ENCODE measurements at regions of chr1 and their contacts with region 1.

Region 1: GRCh38 chr1:160830321-160831153 is 32.1 kb downstream of the CD244 start:
- DNase-seq: peak; percentile 46
- H3K4me3 ChIP-seq: no peak overlapping the region
- H3K27ac ChIP-seq: no peak overlapping the region
- H3K4me1 ChIP-seq: peaks cover 17% of the 10 kb centered on the region
- H3K27me3 ChIP-seq: no peaks in the 10 kb centered on the region
- CTCF ChIP-seq: peak; percentile 63 to 90

Region 2: DNA sequence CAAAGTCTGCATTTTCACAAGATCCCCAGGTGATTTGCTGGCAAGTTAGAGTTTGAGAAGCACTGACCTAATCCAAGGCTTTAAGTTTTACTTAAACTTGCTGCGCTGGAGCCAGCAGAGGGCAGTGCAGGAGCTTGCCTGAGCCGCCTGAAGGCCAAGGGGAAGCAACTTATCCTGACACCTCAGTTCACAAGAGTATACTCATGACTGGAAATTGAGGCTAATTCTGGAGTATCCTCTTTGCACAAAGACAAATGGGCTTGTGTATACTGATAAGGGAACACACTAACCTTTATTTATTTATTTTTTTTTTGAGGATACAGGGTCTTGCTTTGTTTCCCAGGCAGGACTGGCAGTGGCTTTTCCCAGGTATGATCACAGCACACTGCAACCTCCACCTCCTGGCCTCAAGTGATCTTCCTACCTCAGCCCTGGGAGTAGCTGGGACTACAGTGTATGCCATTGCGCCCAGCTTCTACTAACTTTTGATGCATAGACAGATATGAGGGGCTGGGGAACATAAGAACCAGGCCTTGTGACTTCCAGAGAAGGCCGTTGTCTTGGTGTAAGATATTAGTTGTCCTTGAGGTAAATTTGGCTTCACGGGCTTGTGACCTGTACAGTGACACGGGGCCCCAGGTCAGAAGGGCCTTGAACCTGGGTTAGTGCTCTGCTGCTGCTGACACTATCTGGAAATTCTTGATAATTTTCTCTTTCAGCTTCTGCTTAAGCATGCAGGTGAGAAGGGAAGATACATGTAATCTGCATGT is 154.7 kb before region 1 on chr1:
- CTCF ChIA-PET with region 1: no interaction called
- dilution Hi-C with region 1: no loop called
- in situ Hi-C with region 1: no loop called
- intact Hi-C with region 1: loop called (anchors 1 kb)
- DNase-seq: peak; percentile 41
- H3K4me3 ChIP-seq: no peak overlapping the region
- H3K27ac ChIP-seq: no peak overlapping the region
- H3K4me1 ChIP-seq: no peaks in the 10 kb centered on the region
- H3K27me3 ChIP-seq: peaks cover 6% of the 10 kb centered on the region
- CTCF ChIP-seq: peak; percentile 87 to 93

Region 3: DNA sequence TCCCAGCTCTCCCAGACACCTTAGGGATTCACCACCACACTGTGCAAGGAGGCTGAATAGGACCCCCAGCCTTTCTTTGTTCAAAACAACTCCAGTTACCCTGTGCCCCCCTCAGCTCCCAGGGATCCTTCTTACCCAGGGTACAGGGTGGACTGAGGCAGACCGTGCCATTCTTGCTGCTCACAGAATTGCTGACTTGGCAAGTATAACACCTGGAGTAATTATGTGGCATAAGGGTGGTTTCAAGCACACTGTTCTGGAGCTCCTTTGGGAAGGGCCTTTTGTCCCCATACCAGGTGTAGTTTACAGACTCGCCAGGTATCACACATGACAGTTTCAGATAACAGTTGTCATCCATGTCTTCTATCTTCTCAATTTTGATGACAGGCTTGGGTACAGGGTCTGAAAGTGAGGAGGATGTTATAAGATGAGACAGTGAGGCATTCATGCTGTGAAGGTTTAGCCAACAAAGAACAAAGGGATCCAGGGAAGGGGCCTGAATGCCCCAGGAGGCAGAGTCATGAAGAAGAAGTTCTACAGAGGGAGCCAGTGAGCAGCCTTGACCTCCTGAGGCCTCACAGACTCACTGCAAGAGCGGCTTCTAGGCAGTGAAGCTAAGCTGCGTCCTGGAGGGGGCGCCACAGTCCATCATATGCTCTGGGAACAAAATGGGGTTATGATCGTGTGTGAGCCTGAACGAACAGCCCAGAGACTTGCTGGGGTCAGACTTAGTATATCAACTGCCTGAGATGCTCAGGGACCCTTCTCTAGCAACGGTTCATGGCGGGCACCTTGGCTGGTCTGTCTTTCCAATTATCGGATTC is 149.3 kb before region 1 on chr1:
- CTCF ChIA-PET with region 1: interaction called, 3 read pairs
- dilution Hi-C with region 1: no loop called
- in situ Hi-C with region 1: no loop called
- intact Hi-C with region 1: loop called (anchors 1 kb)
- DNase-seq: peak; percentile 61
- H3K4me3 ChIP-seq: no peak overlapping the region
- H3K27ac ChIP-seq: no peak overlapping the region
- H3K4me1 ChIP-seq: no peaks in the 10 kb centered on the region
- H3K27me3 ChIP-seq: no peaks in the 10 kb centered on the region
- CTCF ChIP-seq: peak; percentile 79 to 91

Region 4: DNA sequence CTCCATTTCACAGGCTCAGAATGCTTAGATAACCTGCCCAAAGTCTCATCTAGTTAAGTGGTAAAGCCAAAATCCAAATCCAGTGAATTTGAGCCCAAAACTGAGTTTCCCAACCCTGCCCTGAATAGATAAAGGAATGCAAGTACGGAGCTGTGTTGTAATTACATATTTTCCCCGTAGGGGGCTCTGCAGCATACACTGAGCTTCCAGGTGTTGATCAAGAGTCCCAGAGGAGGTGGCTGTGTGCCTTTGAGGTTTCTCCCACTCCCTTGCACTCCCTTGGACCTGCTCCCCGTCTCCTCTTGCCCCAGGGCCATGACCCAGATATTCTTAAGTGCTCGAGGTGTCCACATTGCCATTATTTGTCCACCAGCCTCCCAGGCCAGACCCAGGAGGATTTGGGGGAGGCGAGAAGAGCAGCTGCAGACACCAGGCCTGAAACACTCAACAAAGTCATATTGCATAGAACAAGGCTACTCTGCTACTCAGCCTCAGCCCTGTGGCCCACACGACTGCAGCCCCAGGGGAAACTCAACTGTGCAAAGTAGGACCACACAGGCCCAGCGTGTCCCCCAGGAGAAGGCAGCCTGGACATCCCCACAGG is 52.9 kb before region 1 on chr1:
- CTCF ChIA-PET with region 1: interaction called, 3 read pairs
- dilution Hi-C with region 1: no loop called
- in situ Hi-C with region 1: no loop called
- intact Hi-C with region 1: loop called (anchors 1 kb)
- DNase-seq: peak; percentile 31
- H3K4me3 ChIP-seq: no peak overlapping the region
- H3K27ac ChIP-seq: no peak overlapping the region
- H3K4me1 ChIP-seq: peaks cover 4% of the 10 kb centered on the region
- H3K27me3 ChIP-seq: no peaks in the 10 kb centered on the region
- CTCF ChIP-seq: peak; percentile 64 to 73

Region 5: DNA sequence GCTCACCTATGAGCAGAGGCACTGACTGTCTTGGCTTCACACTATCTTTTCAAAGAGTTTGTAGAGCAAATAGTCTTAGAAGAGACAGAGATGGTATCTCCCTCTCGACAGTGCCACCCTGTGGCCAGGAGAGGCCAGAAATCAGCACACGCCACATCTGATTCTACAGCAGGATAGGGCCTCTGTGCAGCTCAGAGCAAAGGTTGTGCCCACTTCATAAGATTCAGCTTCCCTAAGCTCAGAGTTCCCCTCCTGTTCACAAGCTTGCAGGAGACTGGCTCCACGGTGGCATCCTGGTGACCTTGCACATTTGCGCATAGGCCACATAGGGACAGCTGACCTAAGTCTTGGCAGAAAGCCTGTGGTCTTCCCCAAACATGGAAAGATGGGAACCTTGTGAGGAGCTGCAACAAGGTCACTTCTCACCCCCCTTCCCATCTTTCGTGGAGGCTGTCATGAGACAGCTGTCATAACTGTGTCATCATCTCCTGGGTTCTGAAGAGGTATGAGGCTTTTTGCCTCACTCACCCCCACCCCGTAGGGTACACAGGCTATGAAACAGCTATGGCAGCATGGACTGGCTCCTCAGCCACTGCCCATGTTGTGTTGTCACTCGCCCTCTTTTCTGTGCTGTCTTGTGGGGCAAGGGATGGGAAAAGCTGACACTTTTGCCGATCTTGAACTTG is 121.0 kb after region 1 on chr1:
- CTCF ChIA-PET with region 1: interaction called, 3 read pairs
- dilution Hi-C with region 1: no loop called
- in situ Hi-C with region 1: loop called (anchors 10 kb)
- intact Hi-C with region 1: loop called (anchors 1 kb)
- DNase-seq: peak; percentile 69
- H3K4me3 ChIP-seq: no peak overlapping the region
- H3K27ac ChIP-seq: peak overlapping the region; percentile 70
- H3K4me1 ChIP-seq: peaks cover 38% of the 10 kb centered on the region
- H3K27me3 ChIP-seq: no peaks in the 10 kb centered on the region
- CTCF ChIP-seq: peak; percentile 84 to 86